PC-9 (cell line): ENCODE measurements at regions of chr22 and their contacts with region 1.

Region 1: GRCh38 chr22:21778705-21779363 is 43.2 kb upstream of the YPEL1 start:
- DNase-seq: no peak
- H3K4me3 ChIP-seq: no peak overlapping the region
- H3K27ac ChIP-seq: no peak overlapping the region
- H3K4me1 ChIP-seq: no peaks in the 10 kb centered on the region
- H3K27me3 ChIP-seq: no peaks in the 10 kb centered on the region
- CTCF ChIP-seq: no peak

Region 2: DNA sequence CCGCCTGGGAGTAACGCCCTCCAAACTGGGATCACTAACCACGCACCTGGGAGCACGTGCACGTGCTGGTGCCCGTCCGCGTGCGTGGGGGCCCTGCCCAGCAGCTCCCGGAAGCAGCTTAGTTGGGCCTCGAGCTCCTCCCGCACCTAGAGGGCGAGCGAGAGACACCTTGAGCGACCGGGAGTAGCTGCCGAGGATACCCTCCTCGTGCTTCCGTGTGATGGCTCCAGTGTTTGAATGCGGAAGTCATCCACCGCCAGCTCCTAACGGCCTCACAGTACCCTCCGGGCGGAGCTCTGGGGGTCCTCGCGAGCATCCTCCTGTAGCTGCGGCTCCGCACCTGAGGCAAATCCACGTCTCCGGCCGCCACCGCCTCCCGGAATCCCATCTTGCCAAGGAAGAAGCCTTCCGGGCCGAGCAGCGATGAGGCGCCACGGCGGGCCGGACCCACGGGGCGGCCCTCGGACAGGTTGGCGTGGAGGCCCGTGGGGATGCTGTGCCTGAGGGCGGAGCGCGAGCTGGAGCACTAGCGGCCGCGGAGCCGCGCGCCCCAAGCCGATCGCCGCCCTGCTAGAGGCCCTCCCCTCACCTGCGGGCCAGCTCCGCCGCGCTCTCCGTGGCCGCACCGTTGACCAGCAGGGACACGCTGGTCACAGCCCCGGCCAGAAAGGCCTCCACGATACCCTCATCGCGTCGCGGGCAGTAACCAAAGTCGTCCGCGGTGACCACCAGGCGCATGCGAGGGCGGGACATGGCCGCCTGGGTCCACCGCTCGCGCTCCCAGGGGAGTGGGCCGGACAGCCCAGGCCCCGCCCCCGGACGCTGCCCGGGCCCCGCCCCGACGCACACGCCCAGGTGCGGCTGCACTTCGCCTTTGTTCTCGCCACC is 149.3 kb before region 1 on chr22 and contains the start of gene YDJC:
- CTCF ChIA-PET with region 1: no interaction called
- POLR2A ChIA-PET with region 1: no interaction called
- intact Hi-C with region 1: no loop called
- DNase-seq: peak; percentile 80 to 91
- H3K4me3 ChIP-seq: peak within 1 kb of the TSS; percentile 80
- H3K27ac ChIP-seq: peak within 1 kb of the TSS; percentile 75
- H3K4me1 ChIP-seq: peaks cover 7% of the 10 kb centered on the region; the same call in 1 of the 2 replicates
- H3K27me3 ChIP-seq: no peaks in the 10 kb centered on the region
- CTCF ChIP-seq: peak; percentile 55; the same call in 1 of the 2 replicates
- total RNA-seq, gene YDJC: 25.7 and 39.1 TPM in 2 replicates

Region 3: GRCh38 chr22:21735200-21736076 is 43.4 kb before region 1 on chr22 and contains the start of gene YPEL1:
- CTCF ChIA-PET with region 1: interaction called, 8 read pairs
- POLR2A ChIA-PET with region 1: interaction called, 15 read pairs
- intact Hi-C with region 1: no loop called
- DNase-seq: peak; percentile 61 to 92
- H3K4me3 ChIP-seq: peak within 1 kb of the TSS; percentile 57
- H3K27ac ChIP-seq: no peak within 1 kb of the TSS
- H3K4me1 ChIP-seq: peaks cover 9% of the 10 kb centered on the region; the same call in 1 of the 2 replicates
- H3K27me3 ChIP-seq: no peaks in the 10 kb centered on the region
- CTCF ChIP-seq: no peak
- total RNA-seq, gene YPEL1: 5.2 and 8.3 TPM in 2 replicates

Region 4: GRCh38 chr22:21857481-21857914 is 78.7 kb after region 1 on chr22:
- CTCF ChIA-PET with region 1: no interaction called
- POLR2A ChIA-PET with region 1: no interaction called
- intact Hi-C with region 1: no loop called
- DNase-seq: no peak
- H3K4me3 ChIP-seq: no peak overlapping the region
- H3K27ac ChIP-seq: no peak overlapping the region
- H3K4me1 ChIP-seq: peaks cover 9% of the 10 kb centered on the region
- H3K27me3 ChIP-seq: no peaks in the 10 kb centered on the region
- CTCF ChIP-seq: no peak